Right ventricle myocardium inferior (tissue), 1 donor: ENCODE measurements at regions of chr3 and their contacts with region 1.

Region 1: DNA sequence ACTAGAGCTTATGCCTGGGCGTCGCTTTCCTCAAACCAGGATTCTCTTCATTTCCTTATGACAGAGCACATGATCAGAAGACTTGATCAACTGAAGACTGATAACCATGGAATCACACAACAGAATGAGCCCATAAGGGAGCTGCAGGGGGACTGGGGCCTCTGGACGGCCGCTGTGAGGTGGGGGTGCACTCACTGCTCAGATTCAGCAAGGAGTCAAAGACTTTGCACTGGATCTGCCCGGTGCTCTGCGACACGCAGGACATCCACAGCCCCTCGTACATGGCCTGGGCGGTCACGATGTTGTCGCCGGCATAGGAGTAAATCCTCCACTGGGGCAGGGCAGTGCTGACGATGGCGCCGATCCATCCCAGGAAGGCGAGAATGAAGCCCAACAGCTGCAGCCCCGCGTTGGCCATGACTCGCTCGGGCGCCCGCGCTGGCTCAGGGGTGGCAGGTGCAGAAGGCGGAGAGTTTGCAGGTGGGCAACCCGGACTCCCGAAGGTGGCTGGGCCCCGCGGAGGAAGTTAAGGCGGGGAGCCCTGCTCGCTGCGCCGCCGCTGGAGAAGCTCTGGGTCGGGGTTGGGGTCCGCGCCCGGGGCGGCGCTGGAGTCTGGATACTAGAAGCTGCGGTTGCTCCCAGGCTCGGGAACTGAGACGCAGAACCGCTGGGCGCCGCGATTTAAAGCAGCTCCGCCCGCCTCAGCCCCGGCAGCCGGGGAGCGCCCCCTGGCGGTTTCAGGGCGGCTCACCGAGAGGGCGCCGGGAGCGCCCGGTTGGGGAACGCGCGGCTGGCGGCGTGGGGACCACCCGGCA is at the start of gene CLDN1:
- DNase-seq: peak; percentile 87
- ATAC-seq: peak; percentile 91
- total RNA-seq, gene CLDN1: 0.46 TPM

Region 2: DNA sequence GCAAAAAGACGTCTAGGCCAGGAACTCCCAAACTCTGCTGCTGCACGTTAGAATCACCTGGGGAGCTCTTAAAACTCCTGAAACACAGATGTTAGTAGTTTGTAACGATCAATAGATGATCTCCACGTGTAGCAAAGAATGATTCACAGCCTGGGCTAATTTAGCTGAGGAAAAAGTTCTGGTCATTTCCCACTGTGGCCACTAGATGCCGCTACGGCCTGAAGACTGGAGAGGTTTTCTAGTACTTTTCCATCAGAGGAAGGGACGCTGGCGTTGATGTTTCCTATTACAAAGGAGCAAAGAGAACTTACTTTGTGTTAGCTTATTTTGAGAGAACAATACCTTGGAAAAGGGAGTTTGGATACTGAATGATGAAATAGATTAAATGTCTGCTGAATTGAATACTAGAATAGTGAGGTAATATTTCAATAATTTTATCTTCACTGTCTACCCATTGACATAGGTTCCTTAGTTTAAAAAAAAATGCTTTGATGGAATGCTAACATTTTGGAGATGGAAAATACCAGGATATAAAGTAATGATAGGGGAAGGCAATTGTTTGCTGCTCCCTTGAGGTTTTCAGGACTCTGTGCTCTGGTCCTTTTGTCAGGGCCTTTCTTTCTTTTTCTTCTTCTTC is 360.4 kb before region 1 on chr3:
- intact Hi-C with region 1: loop called (anchors 5 kb)
- DNase-seq: no peak
- ATAC-seq: peak; percentile 57

Region 3: GRCh38 chr3:190120269-190121060 is 201.5 kb before region 1 on chr3 and contains the start of gene P3H2:
- intact Hi-C with region 1: no loop called
- DNase-seq: peak; percentile 87
- ATAC-seq: peak; percentile 99
- total RNA-seq, gene P3H2: 1.3 TPM

Region 4: GRCh38 chr3:190229632-190230416 is 92.2 kb before region 1 on chr3:
- intact Hi-C with region 1: loop called (anchors 5 kb)
- DNase-seq: no peak
- ATAC-seq: no peak

Region 5: GRCh38 chr3:190384241-190384863 is 62.4 kb after region 1 on chr3:
- intact Hi-C with region 1: loop called (anchors 5 kb)
- DNase-seq: no peak
- ATAC-seq: peak; percentile 88

Region 6: DNA sequence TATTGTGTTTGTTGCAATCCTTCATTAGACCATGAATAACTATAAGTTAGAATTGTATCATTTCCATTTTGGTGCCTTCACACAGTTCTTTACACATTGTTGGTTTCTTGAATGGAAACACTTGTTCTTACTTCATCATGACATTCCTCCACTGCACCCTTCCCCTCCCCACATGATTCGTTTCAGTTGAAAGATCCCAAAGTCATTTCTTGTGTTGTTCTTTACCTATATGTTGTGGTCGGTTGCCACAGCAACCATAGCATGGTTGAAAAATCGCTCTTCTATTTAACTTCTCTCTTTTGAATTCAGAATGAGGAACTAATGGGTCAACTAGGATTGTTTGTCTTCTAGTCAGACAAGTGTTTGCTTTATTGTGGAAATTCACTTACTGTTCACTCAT is 295.2 kb after region 1 on chr3:
- intact Hi-C with region 1: no loop called
- DNase-seq: no peak
- ATAC-seq: peak; percentile 37